ENCODE measurements at regions of chr5 and their contacts with region 1.

Region 1: DNA sequence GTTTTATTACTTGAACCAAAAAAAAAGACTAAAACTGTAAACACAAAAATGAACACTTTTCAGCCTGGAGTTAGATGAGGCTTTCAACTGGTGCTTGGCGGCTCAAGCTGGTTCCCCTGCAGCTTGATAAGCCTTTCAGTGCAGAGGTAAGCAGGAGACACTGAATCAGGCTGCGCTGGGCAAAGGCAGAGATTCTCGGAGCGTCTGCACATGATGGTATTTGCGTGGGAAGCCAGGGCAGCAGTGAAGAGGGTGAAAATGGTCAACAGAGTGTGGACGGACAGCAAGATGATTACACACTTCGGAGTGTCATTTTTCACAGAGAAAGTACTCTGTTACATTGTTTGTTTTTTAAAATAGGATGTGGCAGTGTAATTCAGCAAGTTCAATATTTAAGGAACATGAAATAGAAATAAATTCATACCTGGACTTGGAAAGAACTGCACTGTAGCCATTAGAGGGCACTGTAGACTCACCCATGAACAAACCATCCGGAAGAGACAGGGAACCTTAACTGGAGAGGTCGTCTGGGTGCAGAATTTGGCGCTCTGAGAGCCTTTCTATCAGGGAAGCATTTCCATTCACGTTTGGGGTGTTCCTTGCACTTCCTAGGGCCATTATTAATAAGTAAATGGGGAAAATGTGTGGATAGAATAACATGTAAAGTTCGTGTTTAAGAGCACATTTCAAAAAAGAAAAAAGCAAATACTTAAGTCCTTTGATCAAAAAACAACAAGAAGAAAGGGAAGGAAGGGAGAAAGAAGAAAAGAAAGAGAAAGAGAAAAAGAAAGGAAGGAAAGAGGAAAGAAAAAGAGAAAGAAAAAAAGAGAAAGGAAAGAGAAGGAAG is 69.8 kb downstream of the ICE1 start:
- DNase-seq: peak; percentile 52
- ATAC-seq: peak; percentile 63
- H3K4me3 Mint-ChIP-seq: no peak overlapping the region
- H3K27ac Mint-ChIP-seq: no peak overlapping the region
- H3K4me1 Mint-ChIP-seq: peaks cover 13% of the 10 kb centered on the region
- H3K27me3 Mint-ChIP-seq: peaks cover 5% of the 10 kb centered on the region

Region 2: GRCh38 chr5:5183189-5183699 is 309.1 kb before region 1 on chr5:
- CTCF ChIA-PET with region 1: no interaction called
- POLR2A ChIA-PET with region 1: no interaction called
- intact Hi-C with region 1: no loop called
- DNase-seq: no peak
- ATAC-seq: no peak
- H3K4me3 Mint-ChIP-seq: no peak overlapping the region
- H3K27ac Mint-ChIP-seq: no peak overlapping the region
- H3K4me1 Mint-ChIP-seq: peaks cover 9% of the 10 kb centered on the region
- H3K27me3 Mint-ChIP-seq: peaks cover 22% of the 10 kb centered on the region

Region 3: GRCh38 chr5:5585751-5586341 is 93.5 kb after region 1 on chr5:
- CTCF ChIA-PET with region 1: no interaction called
- POLR2A ChIA-PET with region 1: no interaction called
- intact Hi-C with region 1: no loop called
- DNase-seq: no peak
- ATAC-seq: no peak
- H3K4me3 Mint-ChIP-seq: no peak overlapping the region
- H3K27ac Mint-ChIP-seq: no peak overlapping the region
- H3K4me1 Mint-ChIP-seq: no peaks in the 10 kb centered on the region
- H3K27me3 Mint-ChIP-seq: peaks cover 2% of the 10 kb centered on the region

Region 4: GRCh38 chr5:5705010-5705409 is 212.7 kb after region 1 on chr5:
- CTCF ChIA-PET with region 1: interaction called, 4 read pairs
- POLR2A ChIA-PET with region 1: no interaction called
- intact Hi-C with region 1: loop called in 1 of 2 experiments (anchors 10 kb)
- DNase-seq: no peak
- ATAC-seq: no peak
- H3K4me3 Mint-ChIP-seq: no peak overlapping the region
- H3K27ac Mint-ChIP-seq: no peak overlapping the region
- H3K4me1 Mint-ChIP-seq: no peaks in the 10 kb centered on the region
- H3K27me3 Mint-ChIP-seq: peaks cover 12% of the 10 kb centered on the region

Region 5: DNA sequence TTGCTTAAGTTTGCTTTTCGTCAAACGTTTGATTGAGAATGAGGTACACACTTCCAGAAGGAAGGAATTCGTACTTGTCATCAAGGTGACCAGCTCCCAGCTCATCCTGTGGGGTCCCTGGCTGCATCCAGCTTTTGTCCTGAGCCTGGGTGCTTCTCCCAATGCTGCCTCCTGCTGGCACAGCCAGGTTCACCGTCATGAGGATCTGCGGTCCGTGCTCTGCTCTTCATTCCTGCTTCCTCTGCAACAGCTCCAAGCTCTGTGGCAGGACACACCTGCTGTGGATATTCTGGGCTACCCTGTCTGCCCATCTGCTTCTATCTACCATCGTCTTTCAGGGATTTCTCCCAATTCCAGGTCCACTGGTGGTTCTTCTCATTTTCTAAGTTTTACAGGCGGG is 943.0 kb after region 1 on chr5:
- CTCF ChIA-PET with region 1: no interaction called
- POLR2A ChIA-PET with region 1: no interaction called
- intact Hi-C with region 1: loop called in 1 of 2 experiments (anchors 5 kb)
- DNase-seq: peak; percentile 51
- ATAC-seq: no peak
- H3K4me3 Mint-ChIP-seq: no peak overlapping the region
- H3K27ac Mint-ChIP-seq: no peak overlapping the region
- H3K4me1 Mint-ChIP-seq: no peaks in the 10 kb centered on the region
- H3K27me3 Mint-ChIP-seq: peaks cover 37% of the 10 kb centered on the region

Region 6: DNA sequence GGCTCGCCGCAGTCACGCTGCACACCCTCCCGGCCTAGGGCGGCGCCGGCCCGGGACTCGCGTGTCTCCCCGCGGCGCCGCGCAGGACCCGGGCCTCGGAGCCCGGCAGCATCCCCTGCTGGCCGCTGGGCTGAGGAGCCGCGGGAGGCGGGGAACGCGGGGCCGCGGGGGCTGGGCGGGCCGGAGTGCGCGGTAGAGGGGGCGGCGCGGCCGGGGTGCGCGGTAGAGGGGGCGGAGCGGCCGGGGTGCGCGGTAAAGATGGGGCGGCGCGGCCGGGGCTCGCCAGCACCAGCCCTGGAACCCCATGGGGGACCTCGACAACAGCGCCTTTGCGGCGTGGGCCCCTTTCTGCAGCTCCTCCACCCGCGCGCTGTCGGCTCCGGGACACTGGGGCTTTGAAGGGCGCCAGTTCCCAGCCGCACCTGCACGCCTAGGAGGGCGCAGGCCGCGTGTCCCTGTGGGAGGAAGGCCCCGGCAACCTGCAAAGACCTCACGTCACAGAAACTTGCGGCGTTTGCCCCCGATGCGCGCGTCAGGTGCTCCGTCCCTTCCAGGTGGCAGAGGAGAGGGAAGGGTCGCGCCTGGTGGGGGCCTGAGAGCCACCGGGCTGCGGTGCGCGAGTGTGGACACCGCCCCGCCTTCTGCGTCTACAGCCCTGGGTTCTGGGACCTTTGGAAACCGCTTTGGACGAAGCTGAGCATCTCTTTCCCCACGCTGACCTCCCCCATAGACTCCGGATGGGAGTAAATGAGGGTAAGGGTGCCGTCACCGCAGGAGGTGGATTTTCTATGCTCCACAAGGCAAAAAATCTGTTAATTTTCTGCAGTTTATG is 1091.0 kb after region 1 on chr5:
- CTCF ChIA-PET with region 1: no interaction called
- POLR2A ChIA-PET with region 1: no interaction called
- intact Hi-C with region 1: loop called (anchors 5 to 10 kb)
- DNase-seq: peak; percentile 41
- ATAC-seq: peak; percentile 82
- H3K4me3 Mint-ChIP-seq: no peak overlapping the region
- H3K27ac Mint-ChIP-seq: no peak overlapping the region
- H3K4me1 Mint-ChIP-seq: peaks cover 3% of the 10 kb centered on the region
- H3K27me3 Mint-ChIP-seq: peaks cover 50% of the 10 kb centered on the region

Region 7: DNA sequence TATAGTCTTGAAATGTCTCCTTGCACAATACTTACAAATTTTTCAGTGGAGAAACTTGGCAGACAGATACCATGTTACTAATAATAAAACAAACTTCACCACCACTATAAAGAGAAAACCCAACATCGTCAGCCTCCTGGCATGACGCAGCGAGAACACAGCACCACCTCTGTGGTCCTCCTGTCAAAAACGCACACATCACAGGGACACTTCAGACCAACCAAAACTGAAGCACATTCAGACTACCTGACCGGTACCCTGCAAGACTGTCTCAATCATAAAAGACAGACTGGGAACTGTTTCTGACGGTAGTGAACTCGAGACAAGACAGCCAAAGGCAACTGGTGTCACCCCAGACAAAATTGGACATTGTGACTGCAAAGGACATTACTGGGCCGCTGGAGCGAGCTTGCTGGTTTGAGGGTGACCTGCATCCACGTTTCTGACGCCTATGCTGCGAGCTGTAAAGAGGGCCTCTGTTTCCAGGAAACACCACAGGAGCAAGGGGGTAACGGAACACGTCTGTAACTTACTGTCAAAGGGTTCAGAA is 1106.1 kb after region 1 on chr5:
- CTCF ChIA-PET with region 1: no interaction called
- POLR2A ChIA-PET with region 1: no interaction called
- intact Hi-C with region 1: no loop called
- DNase-seq: no peak
- ATAC-seq: no peak
- H3K4me3 Mint-ChIP-seq: no peak overlapping the region
- H3K27ac Mint-ChIP-seq: no peak overlapping the region
- H3K4me1 Mint-ChIP-seq: no peaks in the 10 kb centered on the region
- H3K27me3 Mint-ChIP-seq: no peaks in the 10 kb centered on the region